ENCODE measurements at regions of chr14 and their contacts with region 1.

Region 1: DNA sequence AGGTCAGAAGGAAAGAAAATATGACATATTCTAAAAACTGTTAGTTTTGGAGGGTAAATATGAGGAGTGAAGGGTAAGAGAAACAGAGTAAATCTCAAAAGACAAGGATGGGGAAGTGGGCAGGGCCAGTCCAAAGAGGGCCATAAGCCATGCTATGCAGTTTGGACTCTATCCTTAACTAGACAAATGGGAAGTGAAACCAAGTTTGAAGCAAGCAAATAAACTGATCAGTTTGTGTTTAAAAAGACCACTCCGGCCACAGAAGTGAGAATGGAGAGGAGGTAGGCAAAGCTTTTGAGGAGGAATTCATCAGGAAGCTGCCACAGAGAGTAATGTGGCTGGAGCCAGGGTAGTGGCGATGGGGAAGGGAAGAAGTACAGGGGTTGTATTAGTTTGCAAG is 37.5 kb upstream of the DAAM1 start:
- DNase-seq: no peak
- ATAC-seq: no peak
- H3K4me3 ChIP-seq: no peak overlapping the region
- H3K27ac ChIP-seq: no peak overlapping the region
- H3K4me1 ChIP-seq: no peaks in the 10 kb centered on the region
- H3K27me3 ChIP-seq: no peaks in the 10 kb centered on the region; a peak in 1 of 5 replicates
- CTCF ChIP-seq: no peak
- EP300 ChIP-seq: no peak
- POLR2A ChIP-seq: no peak
- RAD21 ChIP-seq: no peak

Region 2: GRCh38 chr14:59245809-59246295 is 94.9 kb after region 1 on chr14:
- CTCF ChIA-PET with region 1: no interaction called
- POLR2A ChIA-PET with region 1: no interaction called
- in situ Hi-C with region 1: no loop called
- intact Hi-C with region 1: loop called (anchors 10 kb)
- DNase-seq: no peak
- ATAC-seq: no peak
- H3K4me3 ChIP-seq: no peak overlapping the region
- H3K27ac ChIP-seq: no peak overlapping the region
- H3K4me1 ChIP-seq: no peaks in the 10 kb centered on the region
- H3K27me3 ChIP-seq: no peaks in the 10 kb centered on the region
- CTCF ChIP-seq: no peak
- EP300 ChIP-seq: no peak
- POLR2A ChIP-seq: no peak
- RAD21 ChIP-seq: no peak

Region 3: DNA sequence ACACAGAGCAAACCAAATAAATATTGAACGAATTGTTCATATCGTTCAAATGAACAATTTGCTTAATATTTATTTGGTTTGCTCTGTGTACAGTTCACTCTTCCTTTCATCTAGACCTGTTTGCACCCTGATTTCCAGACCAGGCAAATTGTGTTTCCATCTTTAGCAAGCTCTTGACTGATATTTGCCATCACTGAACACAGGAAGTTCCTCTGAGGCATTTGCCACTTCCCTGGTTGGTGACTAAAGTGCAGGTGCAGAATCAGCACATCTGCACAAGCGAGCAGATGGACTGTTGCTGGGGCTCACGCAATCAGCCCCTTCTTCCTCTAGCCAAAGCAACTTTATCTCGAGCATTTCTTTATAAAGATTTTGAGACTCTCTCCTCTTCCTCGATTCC is 150.4 kb after region 1 on chr14:
- CTCF ChIA-PET with region 1: no interaction called
- POLR2A ChIA-PET with region 1: no interaction called
- in situ Hi-C with region 1: no loop called
- intact Hi-C with region 1: loop called (anchors 10 kb)
- DNase-seq: no peak
- ATAC-seq: no peak
- H3K4me3 ChIP-seq: no peak overlapping the region
- H3K27ac ChIP-seq: no peak overlapping the region
- H3K4me1 ChIP-seq: peaks cover 0 to 3% of the 10 kb centered on the region in 2 experiments; a peak in 1 of 5 replicates
- H3K27me3 ChIP-seq: no peaks in the 10 kb centered on the region
- CTCF ChIP-seq: no peak
- EP300 ChIP-seq: no peak
- POLR2A ChIP-seq: no peak
- RAD21 ChIP-seq: no peak